HEK293 (cell line): ENCODE measurements at regions of chr2 and their contacts with region 1.

Region 1: GRCh38 chr2:55519938-55520885 is 694 bp downstream of the CFAP36 start:
- H3K4me3 ChIP-seq: peak overlapping the region; percentile 79
- H3K27ac ChIP-seq: peak overlapping the region; percentile 54
- H3K4me1 ChIP-seq: no peaks in the 10 kb centered on the region
- CTCF ChIP-seq: no peak

Region 2: GRCh38 chr2:55617175-55618024 is 97.2 kb after region 1 on chr2 and contains the start of gene PPP4R3B:
- CTCF ChIA-PET with region 1: no interaction called
- POLR2A ChIA-PET with region 1: interaction called, 28 read pairs
- H3K4me3 ChIP-seq: peak within 1 kb of the TSS; percentile 90
- H3K27ac ChIP-seq: peak within 1 kb of the TSS; percentile 96
- H3K4me1 ChIP-seq: peaks cover 2% of the 10 kb centered on the region; the same call in 1 of the 2 replicates
- CTCF ChIP-seq: peak; percentile 93